ENCODE measurements at regions of chr7 and their contacts with region 1.

Region 1: GRCh38 chr7:94301024-94301586 is 93.6 kb upstream of the COL1A2 start:
- DNase-seq: peak; percentile 92

Region 2: GRCh38 chr7:94266238-94266644 is 34.9 kb before region 1 on chr7:
- intact Hi-C with region 1: no loop called
- DNase-seq: no peak

Region 3: DNA sequence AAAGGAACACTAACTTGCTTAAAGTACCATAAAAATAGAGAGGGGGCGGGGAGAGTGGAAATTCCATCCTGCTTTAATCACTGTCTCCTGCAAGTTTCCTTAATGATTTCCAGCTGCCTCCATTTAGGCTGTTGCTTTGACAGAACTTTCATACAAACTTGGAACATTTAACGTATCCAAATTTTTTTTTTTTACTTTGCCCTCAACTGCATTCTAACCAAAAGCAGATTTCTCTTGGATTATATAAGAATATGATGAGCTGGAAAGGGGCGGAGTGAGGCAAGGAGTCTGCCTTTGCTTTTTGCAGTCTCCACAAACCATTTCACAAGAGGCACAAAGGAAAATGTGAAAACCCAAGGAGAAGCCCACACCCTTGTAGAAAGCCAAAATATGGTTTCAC is 47.0 kb after region 1 on chr7:
- intact Hi-C with region 1: loop called (anchors 5 to 10 kb)
- DNase-seq: no peak

Region 4: GRCh38 chr7:94355454-94355853 is 54.3 kb after region 1 on chr7:
- intact Hi-C with region 1: loop called in 1 of 2 experiments (anchors 10 kb)
- DNase-seq: no peak

Measured in posterior vena cava (tissue), 2 donors.